ENCODE measurements at regions of chr11 and their contacts with region 1.

Region 1: GRCh38 chr11:10808553-10809372 is at the start of gene EIF4G2:
- DNase-seq: peak; percentile 99
- H3K4me3 ChIP-seq: peak within 1 kb of the TSS; percentile 77 to 97 (median 87)
- H3K27ac ChIP-seq: peak within 1 kb of the TSS; percentile 93 to 99 (median 95)
- H3K4me1 ChIP-seq: peaks cover 12 to 28% of the 10 kb centered on the region in 2 donors
- H3K27me3 ChIP-seq: no peaks in the 10 kb centered on the region
- CTCF ChIP-seq: no peak
- POLR2A ChIP-seq: peak; percentile 96 to 100
- total RNA-seq, gene EIF4G2: 501 to 609 (median 578) TPM

Region 2: DNA sequence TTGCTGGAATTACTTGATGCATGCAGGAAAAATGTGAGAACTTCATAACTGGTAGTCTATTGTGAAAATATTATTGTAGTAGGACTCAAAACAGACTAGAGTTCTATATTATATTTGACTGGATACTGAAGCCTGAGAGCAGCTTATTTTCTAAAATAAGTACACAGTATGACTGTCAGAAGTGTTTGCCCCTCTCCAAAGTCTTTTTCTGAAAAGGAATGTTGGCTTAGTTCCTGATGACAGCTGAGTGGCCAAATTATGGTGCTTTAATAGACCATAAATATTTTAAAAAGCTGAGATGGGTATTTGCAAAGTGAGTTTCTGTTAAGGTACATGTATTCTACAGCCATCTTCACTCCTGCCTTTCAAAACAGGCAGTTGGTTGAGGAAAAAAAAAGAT is 36.0 kb after region 1 on chr11:
- intact Hi-C with region 1: loop called (anchors 5 kb)
- DNase-seq: no peak
- H3K4me3 ChIP-seq: no peak overlapping the region
- H3K27ac ChIP-seq: no peak overlapping the region
- H3K4me1 ChIP-seq: peaks cover 7 to 10% of the 10 kb centered on the region in 2 donors
- H3K27me3 ChIP-seq: no peaks in the 10 kb centered on the region
- CTCF ChIP-seq: no peak
- POLR2A ChIP-seq: no peak

Region 3: DNA sequence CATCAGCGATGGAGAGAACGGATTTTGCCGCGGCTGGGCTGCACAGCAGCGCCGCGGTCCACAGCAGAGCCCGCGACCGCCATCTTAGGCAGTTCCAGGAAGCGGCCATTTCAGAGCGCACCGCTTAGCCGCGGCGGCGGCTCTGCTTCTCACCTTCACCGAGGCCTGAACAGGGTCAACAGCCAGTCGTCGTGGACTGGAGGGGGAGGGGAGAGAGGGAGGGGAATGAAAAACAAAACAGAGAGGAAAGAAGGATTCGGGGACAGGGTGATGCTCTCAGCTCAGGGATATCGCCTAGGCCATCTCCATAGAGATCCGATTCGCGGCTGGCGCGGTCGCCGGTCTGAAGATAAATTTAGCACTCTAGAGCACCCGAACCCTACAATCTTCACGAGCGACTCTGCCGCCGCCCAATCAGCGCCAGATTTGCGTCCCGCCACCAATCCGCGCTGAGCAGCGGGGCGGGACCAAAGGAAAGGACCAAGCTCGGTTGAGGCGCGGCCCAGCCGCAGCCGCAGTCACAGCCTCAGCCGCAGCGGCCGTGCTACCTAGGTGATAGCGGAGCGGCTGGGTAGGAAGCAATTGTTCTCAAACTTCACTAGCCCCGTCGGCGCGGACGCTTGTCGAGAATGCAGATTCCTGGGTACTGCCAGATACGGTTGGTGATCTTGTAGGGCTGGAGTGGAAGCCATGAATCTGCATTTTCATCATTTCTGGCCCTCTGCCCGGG is 49.1 kb after region 1 on chr11 and contains the start of gene ZBED5:
- intact Hi-C with region 1: loop called (anchors 5 kb)
- DNase-seq: peak; percentile 98 to 99
- H3K4me3 ChIP-seq: peak within 1 kb of the TSS; percentile 57 to 95 (median 60)
- H3K27ac ChIP-seq: peak within 1 kb of the TSS; percentile 94 to 99 (median 96)
- H3K4me1 ChIP-seq: peaks cover 16 to 20% of the 10 kb centered on the region in 2 donors
- H3K27me3 ChIP-seq: no peaks in the 10 kb centered on the region
- CTCF ChIP-seq: peak in 1 of 6 experiments; percentile 16
- POLR2A ChIP-seq: peak; percentile 78 to 99
- total RNA-seq, gene ZBED5: 42.9 to 58.6 (median 52.4) TPM

Measured in thyroid gland (tissue), 4 donors.